Aorta (tissue), 5 donors: ENCODE measurements at regions of chr11 and their contacts with region 1.

Region 1: DNA sequence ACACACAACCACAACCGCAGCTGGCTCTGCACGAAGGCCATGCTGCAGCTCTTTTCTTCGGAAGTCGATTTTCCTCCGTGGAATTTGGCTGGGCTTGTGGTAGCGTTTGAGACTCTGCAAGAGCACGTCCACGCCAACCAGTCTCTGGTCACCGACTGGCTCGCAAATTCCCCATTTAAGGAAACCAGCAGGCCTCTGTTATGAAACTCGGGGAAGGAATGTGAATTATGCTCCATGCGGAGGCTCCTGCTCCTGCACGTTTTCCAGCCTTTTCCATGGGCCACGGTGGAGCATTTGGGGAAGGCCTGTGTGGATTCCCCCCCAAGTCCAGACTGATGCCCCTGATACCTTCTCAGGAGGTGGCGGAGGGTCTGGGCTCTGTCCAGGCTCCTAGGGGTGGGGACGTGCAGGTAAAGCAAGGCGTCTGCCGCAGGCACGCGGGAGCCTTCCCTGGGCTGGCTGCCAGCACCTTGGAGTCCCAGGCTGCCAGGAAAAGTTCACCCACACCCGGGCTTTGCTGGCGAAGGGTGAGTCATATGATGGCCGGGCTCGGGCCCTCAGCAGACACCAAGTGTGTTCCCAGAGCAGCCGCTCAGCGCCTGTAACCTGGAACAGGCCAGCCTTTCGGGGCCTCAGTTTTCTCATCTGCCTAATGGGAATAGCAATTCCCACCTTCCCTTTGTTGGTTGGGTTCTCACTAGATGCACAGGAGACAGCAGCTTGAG is 41.9 kb downstream of the LRP5 start:
- DNase-seq: peak; percentile 94 to 97
- ATAC-seq: peak; percentile 90
- H3K4me3 ChIP-seq: no peak overlapping the region
- H3K27ac ChIP-seq: peak overlapping the region in 1 of 2 donors; percentile 91
- H3K4me1 ChIP-seq: peaks cover 3% of the 10 kb centered on the region in 2 donors
- H3K27me3 ChIP-seq: no peaks in the 10 kb centered on the region

Region 2: GRCh38 chr11:68010090-68011041 is 343.9 kb before region 1 on chr11 and contains the start of gene ALDH3B1:
- intact Hi-C with region 1: no loop called
- DNase-seq: peak; percentile 97
- ATAC-seq: peak; percentile 87
- H3K4me3 ChIP-seq: no peak within 1 kb of the TSS
- H3K27ac ChIP-seq: peak within 1 kb of the TSS in 1 of 2 donors; percentile 61
- H3K4me1 ChIP-seq: no peaks in the 10 kb centered on the region
- H3K27me3 ChIP-seq: no peaks in the 10 kb centered on the region
- total RNA-seq, gene ALDH3B1: 10.9 to 12.4 TPM

Region 3: GRCh38 chr11:68312117-68312779 is 42.1 kb before region 1 on chr11 and contains the start of gene LRP5:
- intact Hi-C with region 1: loop called in 1 of 2 experiments (anchors 1 kb)
- DNase-seq: no peak
- ATAC-seq: no peak
- H3K4me3 ChIP-seq: peak within 1 kb of the TSS; percentile 16 to 97
- H3K27ac ChIP-seq: peak within 1 kb of the TSS; percentile 38 to 61
- H3K4me1 ChIP-seq: no peaks in the 10 kb centered on the region
- H3K27me3 ChIP-seq: no peaks in the 10 kb centered on the region
- total RNA-seq, gene LRP5: 85.9 to 103 TPM

Region 4: GRCh38 chr11:68370211-68371111 is 16.2 kb after region 1 on chr11:
- intact Hi-C with region 1: loop called in 1 of 2 experiments (anchors 1 kb)
- DNase-seq: peak; percentile 73 to 77
- ATAC-seq: peak; percentile 54
- H3K4me3 ChIP-seq: no peak overlapping the region
- H3K27ac ChIP-seq: peak overlapping the region; percentile 44 to 87
- H3K4me1 ChIP-seq: peaks cover 0 to 3% of the 10 kb centered on the region in 2 donors
- H3K27me3 ChIP-seq: no peaks in the 10 kb centered on the region